HepG2 (cell line): ENCODE measurements at regions of chr11 and their contacts with region 1.

Region 1: DNA sequence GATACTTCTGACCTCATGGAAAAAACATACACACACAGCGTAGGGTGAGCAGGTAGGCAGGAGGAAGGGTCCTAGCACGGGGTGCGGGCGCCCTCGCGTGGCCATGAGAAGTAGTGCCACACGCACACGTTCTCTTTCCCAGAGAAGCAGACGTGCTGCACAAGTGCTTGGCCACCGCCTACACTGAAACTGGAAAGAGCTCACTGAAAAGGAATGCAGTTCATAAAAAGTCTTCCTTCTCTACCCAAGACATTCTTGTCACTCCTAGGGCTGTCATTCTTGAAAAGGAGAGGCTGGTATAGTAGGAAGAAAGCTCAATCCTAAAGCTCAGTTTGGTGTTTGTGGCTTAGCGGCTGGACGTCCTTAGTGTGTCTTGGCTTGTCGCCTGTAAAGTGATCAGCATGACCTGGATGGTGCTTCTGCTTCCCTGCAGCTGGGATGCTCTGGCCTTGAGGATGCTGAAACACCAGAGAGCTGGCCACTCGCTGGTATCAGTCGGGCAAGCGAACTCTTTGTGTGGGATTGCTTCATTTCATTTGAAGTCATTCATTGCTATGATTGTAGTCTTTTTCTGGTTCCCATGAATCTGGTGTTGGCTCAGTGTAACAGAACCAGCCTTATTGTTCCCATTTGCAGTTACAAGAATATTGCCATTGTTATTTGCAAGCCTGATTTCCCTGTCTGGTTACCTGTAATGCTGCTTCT is 303.8 kb downstream of the NTM start:
- DNase-seq: peak; percentile 21
- ATAC-seq: peak; percentile 89
- H3K4me3 ChIP-seq: no peak overlapping the region
- H3K27ac ChIP-seq: no peak overlapping the region
- H3K4me1 ChIP-seq: no peaks in the 10 kb centered on the region
- H3K27me3 ChIP-seq: peaks cover 0 to 11% of the 10 kb centered on the region in 2 experiments; a peak in 3 of 5 replicates
- CTCF ChIP-seq: peak; percentile 94
- EP300 ChIP-seq: no peak
- POLR2A ChIP-seq: no peak
- RAD21 ChIP-seq: peak; percentile 74

Region 2: GRCh38 chr11:130916910-130917309 is 757.3 kb before region 1 on chr11:
- CTCF ChIA-PET with region 1: interaction called, 18 read pairs
- POLR2A ChIA-PET with region 1: no interaction called
- in situ Hi-C with region 1: loop called (anchors 5 kb)
- intact Hi-C with region 1: no loop called
- DNase-seq: no peak
- ATAC-seq: no peak
- H3K4me3 ChIP-seq: no peak overlapping the region
- H3K27ac ChIP-seq: no peak overlapping the region
- H3K4me1 ChIP-seq: no peaks in the 10 kb centered on the region
- H3K27me3 ChIP-seq: 0 out of 5 replicates have a peak, but pooled peaks cover 0 to 8% of the 10 kb centered on the region in 2 experiments
- CTCF ChIP-seq: no peak
- EP300 ChIP-seq: no peak
- POLR2A ChIP-seq: no peak
- RAD21 ChIP-seq: no peak

Region 3: GRCh38 chr11:131038597-131038996 is 635.6 kb before region 1 on chr11:
- CTCF ChIA-PET with region 1: no interaction called
- POLR2A ChIA-PET with region 1: no interaction called
- in situ Hi-C with region 1: no loop called
- intact Hi-C with region 1: loop called (anchors 1 kb)
- DNase-seq: no peak
- ATAC-seq: peak; percentile 72
- H3K4me3 ChIP-seq: no peak overlapping the region
- H3K27ac ChIP-seq: no peak overlapping the region
- H3K4me1 ChIP-seq: no peaks in the 10 kb centered on the region
- H3K27me3 ChIP-seq: peaks cover 1 to 22% of the 10 kb centered on the region in 2 experiments; a peak in 3 of 5 replicates
- CTCF ChIP-seq: 0 out of 2 replicates have a peak, but pooled peaks have one; percentile 16
- EP300 ChIP-seq: no peak
- POLR2A ChIP-seq: no peak
- RAD21 ChIP-seq: no peak

Region 4: GRCh38 chr11:131408025-131408640 is 266.1 kb before region 1 on chr11:
- CTCF ChIA-PET with region 1: interaction called, 5 read pairs
- POLR2A ChIA-PET with region 1: no interaction called
- in situ Hi-C with region 1: loop called (anchors 10 kb)
- intact Hi-C with region 1: loop called (anchors 1 kb)
- DNase-seq: peak; percentile 38
- ATAC-seq: peak; percentile 87
- H3K4me3 ChIP-seq: no peak overlapping the region
- H3K27ac ChIP-seq: no peak overlapping the region
- H3K4me1 ChIP-seq: no peaks in the 10 kb centered on the region
- H3K27me3 ChIP-seq: no peaks in the 10 kb centered on the region
- CTCF ChIP-seq: peak; percentile 66
- EP300 ChIP-seq: no peak
- POLR2A ChIP-seq: no peak
- RAD21 ChIP-seq: no peak

Region 5: DNA sequence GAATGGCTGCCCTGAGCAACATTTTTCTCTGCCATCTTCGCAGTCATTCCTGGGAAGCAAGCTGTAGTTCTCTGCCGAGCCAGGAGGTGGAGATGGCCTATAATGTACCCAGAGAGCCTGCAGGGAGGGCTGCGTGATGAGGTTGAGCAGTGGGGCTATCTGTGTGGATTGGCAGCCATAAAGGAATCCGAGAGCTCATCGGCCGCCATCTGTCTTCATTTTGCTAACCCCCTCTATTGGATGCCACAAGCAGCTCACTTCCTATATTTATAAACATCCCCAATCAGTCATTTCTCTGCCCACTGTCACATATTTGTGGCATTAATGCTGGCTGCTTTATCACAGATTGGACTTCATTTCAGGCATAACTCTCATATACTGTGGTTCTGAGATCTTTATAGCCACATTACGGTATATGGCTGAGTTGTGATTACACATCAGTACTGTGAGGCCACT is 94.2 kb before region 1 on chr11:
- CTCF ChIA-PET with region 1: interaction called, 13 read pairs
- POLR2A ChIA-PET with region 1: no interaction called
- in situ Hi-C with region 1: loop called (anchors 5 kb)
- intact Hi-C with region 1: loop called (anchors 1 kb)
- DNase-seq: peak; percentile 7
- ATAC-seq: peak; percentile 92
- H3K4me3 ChIP-seq: no peak overlapping the region
- H3K27ac ChIP-seq: no peak overlapping the region
- H3K4me1 ChIP-seq: no peaks in the 10 kb centered on the region
- H3K27me3 ChIP-seq: peaks cover 6 to 44% of the 10 kb centered on the region in 2 experiments; a peak in 4 of 5 replicates
- CTCF ChIP-seq: peak; percentile 53
- EP300 ChIP-seq: no peak
- POLR2A ChIP-seq: no peak
- RAD21 ChIP-seq: no peak

Region 6: GRCh38 chr11:131710511-131710910 is 36.3 kb after region 1 on chr11:
- CTCF ChIA-PET with region 1: no interaction called
- POLR2A ChIA-PET with region 1: no interaction called
- in situ Hi-C with region 1: no loop called
- intact Hi-C with region 1: no loop called
- DNase-seq: no peak
- ATAC-seq: no peak
- H3K4me3 ChIP-seq: no peak overlapping the region
- H3K27ac ChIP-seq: no peak overlapping the region
- H3K4me1 ChIP-seq: no peaks in the 10 kb centered on the region
- H3K27me3 ChIP-seq: no peaks in the 10 kb centered on the region
- CTCF ChIP-seq: no peak
- EP300 ChIP-seq: no peak
- POLR2A ChIP-seq: no peak
- RAD21 ChIP-seq: no peak